ENCODE measurements at regions of chr18 and their contacts with region 1.

Region 1: GRCh38 chr18:55415258-55415871 is 172.6 kb downstream of the TCF4 start:
- DNase-seq: peak; percentile 96

Region 2: DNA sequence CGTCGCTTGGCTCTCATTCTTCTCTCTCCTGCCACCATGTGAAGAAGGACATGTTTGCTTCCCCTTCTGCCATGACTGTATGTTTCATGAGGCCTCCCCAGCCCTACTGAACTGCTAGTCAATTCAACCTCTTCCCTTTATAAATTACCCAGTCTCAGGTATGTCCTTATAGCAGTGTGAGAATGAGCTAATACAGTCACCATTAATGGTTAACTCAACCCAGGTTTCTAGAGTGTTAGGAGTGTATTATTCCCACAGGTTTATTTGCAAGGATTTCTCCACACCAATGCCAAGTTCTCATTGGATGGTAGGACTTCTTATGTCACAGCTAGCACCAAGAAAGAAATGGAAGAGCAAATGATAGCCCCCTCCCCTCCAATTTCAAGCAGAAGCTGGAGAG is 752.4 kb before region 1 on chr18:
- intact Hi-C with region 1: no loop called
- DNase-seq: no peak

Region 3: GRCh38 chr18:55001394-55002024 is 413.9 kb before region 1 on chr18:
- intact Hi-C with region 1: no loop called
- DNase-seq: no peak

Region 4: DNA sequence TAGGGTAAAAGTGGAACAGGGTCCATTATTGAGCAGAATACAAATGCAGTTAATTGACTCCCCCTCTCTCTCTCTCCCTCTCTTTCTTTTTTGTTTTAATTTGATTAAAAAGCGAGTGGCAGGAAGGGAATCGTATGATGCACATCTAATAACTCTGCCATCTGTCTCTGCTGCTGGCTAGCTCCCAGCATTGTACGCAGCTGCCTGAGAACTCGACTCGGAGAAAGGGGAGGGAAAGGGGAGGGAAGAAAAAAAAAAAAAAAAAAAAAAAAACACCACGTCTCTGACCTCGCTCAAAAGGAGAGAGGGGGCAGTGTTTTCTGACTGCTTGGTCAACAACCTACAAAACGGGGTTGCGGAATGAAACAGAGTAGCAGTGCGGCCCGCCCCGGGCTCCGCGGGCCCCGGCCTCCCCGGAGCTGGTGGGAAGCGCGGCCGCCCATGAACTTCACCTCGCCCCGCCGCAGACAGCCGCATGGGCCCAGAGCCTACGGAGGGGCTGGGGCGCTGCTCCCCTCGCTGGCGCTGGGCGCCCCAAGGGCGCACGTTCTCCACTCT is 93.1 kb before region 1 on chr18:
- intact Hi-C with region 1: no loop called
- DNase-seq: peak; percentile 96

Region 5: DNA sequence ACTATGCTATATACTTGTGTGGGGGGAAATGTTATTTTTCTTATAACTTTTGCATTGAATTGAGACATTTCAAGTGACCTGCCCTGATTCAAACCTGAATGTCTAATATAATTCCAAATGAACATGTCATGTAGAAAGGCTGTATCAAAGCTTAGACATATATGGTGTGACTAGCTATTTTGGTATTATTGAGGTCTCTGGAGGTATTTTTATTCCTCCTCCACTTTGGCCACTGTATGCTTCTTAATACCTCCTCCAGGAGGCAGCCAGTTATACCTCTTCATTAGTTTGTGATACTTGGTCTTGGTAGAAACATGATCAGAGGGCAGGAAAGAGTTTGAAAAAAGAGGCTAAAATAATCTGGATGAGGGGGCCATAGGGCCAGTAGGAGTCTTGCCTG is 44.4 kb before region 1 on chr18:
- intact Hi-C with region 1: no loop called
- DNase-seq: no peak

Region 6: DNA sequence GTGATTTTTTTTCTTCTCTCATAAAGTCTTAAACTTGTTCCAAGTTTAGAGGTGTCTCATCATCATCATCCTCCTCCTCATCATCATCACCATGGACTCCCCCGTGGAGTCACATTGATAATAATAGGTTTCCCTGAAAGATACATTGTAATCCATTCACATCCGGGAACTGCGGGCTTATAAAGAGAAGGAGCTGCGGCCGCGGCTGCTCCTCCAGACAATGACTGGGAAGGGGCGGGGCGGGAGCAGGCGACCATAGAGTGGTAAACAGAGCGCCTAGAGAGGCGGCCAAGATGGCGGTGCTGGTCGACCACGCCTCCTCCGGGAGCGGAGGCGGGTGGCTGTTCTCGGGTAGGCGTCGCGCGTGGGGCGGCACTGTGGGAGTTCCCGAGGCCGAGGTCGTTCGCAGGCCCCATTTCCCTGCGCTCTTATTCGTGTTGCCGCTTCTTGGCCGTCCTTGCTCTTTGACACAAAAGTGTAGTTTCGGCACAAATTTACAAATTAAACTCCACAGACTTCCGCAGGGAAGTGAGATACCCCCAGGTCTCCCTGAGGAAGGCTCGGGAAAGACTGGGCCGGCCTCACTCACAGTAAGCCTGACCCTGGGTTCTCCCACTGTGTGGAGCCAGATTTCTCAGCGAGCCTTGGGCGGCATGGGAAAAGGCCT is 174.4 kb after region 1 on chr18:
- intact Hi-C with region 1: loop called in 1 of 2 experiments (anchors 10 kb)
- DNase-seq: peak; percentile 99